PC-3 (cell line): ENCODE measurements at regions of chr17 and their contacts with region 1.

Region 1: DNA sequence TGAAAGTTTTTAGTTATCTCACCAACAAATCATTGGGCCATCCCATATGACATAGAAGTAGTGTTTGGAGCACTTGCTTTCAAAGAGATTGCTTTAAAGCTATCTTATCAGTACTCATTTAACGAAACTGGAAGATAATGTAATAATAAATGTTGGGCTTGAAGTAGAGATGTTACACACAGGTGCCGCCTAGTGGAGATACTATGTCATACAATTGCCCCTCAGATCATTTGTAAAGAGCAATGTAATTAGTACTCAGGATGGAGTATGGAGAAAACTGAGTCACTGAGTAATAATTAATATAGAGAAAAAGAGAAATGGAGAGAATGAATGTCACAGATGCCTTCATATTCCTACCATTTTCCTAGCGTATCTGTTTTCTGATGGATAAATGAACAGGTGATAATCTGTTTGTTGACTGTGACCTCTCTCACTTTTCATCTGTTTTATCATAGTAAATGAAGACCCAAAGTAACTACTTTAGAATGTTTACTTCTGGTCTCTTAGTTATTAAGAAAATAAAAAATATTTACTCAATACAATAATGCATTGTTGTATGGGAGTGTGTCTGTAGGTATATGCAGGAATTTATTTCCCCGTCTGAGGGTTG is 80.4 kb downstream of the EFCAB5 start:
- DNase-seq: peak; percentile 54
- ATAC-seq: no peak
- H3K4me3 ChIP-seq: no peak overlapping the region
- H3K27ac ChIP-seq: no peak overlapping the region
- H3K4me1 ChIP-seq: no peaks in the 10 kb centered on the region
- H3K27me3 ChIP-seq: no peaks in the 10 kb centered on the region
- CTCF ChIP-seq: peak; percentile 76

Region 2: DNA sequence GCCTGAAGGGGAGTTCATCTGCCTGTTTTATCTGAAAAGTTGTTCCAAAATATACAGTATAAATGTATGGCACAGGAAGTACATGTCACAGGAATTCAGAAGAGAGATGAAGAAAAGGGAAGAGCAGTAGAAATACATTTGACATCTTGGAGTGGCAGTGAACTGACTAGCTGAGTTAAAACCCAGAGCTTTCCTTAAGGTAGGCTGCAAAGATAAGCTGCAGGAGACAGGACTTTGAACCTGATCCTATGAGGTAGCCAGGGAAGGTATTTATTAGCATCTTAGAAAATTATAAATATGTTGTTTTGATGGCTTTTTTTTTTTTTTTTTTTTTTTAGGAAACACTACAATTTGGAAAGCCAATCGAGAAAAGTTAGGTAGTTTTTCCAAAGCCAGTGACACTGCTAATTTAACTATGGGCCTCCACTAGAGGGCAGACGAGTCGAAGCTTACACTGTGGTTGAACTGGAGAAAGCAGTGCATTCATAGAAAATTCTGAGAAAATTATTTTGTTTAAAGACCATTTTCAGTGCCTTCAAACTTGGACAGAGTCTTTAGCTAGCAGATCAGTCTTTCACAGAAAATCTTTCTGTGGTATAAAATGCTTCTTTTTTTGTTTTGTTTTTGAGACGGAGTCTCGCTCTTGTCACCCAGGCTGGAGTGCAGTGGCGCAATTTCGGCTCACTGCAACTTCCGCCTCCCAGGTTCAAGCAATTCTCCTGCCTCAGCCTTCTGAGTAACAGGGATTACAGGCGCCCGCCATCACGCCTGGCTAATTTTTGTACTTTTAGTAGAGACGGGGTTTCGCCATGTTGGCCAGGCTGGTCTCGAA is 214.1 kb before region 1 on chr17:
- CTCF ChIA-PET with region 1: no interaction called
- POLR2A ChIA-PET with region 1: no interaction called
- intact Hi-C with region 1: loop called (anchors 5 kb)
- DNase-seq: peak; percentile 63
- ATAC-seq: no peak; the same call in 1 of the 2 replicates
- H3K4me3 ChIP-seq: no peak overlapping the region
- H3K27ac ChIP-seq: no peak overlapping the region
- H3K4me1 ChIP-seq: no peaks in the 10 kb centered on the region
- H3K27me3 ChIP-seq: no peaks in the 10 kb centered on the region
- CTCF ChIP-seq: peak; percentile 68

Region 3: DNA sequence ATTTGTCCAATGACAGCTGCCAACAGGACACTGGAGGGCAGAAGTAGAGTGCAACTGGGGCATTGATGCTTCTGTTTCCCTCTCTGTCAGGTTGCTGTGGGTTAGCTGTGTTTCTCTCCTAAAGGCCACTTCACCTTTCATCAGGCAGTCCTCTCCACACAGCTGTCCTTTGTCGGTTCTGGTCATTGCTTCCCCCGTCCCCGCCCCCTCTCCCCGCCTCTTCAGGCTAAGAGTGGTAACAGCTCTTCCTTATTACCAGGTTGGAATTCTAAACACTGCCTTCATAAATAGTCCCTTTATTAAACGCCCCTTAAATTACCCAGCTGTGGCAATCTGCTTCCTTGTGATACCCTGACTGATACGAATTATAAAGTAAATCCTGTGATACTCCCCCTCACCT is 63.0 kb after region 1 on chr17:
- CTCF ChIA-PET with region 1: interaction called, 11 read pairs
- POLR2A ChIA-PET with region 1: no interaction called
- intact Hi-C with region 1: no loop called
- DNase-seq: no peak
- ATAC-seq: no peak
- H3K4me3 ChIP-seq: no peak overlapping the region
- H3K27ac ChIP-seq: no peak overlapping the region
- H3K4me1 ChIP-seq: no peaks in the 10 kb centered on the region
- H3K27me3 ChIP-seq: peaks cover 11% of the 10 kb centered on the region
- CTCF ChIP-seq: no peak